ENCODE measurements at regions of chr7 and their contacts with region 1.

Region 1: DNA sequence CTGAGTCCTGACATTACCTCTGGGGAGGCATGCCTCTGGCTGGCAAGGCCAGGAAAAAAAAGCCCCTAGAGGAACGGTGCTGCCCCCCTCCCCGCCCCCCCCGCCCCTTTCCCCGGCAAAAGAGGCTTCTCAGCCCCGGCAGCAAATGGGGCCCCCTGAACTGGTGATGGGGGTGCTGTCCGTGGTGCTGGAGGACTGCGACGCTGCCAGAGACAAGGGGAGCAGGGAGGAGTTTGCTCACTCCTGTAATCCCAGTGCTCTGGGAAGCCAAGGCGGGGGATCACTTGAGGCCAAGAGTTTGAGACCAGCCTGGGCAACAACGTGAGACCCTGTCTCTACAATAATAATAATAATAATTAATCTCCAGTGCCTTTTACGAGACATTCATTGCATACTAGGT is 23.7 kb downstream of the SRRM3 start:
- DNase-seq: peak; percentile 60
- ATAC-seq: no peak
- H3K4me3 Mint-ChIP-seq: no peak overlapping the region
- H3K27ac Mint-ChIP-seq: no peak overlapping the region
- H3K4me1 Mint-ChIP-seq: no peaks in the 10 kb centered on the region
- H3K27me3 Mint-ChIP-seq: peaks cover 35% of the 10 kb centered on the region

Region 2: DNA sequence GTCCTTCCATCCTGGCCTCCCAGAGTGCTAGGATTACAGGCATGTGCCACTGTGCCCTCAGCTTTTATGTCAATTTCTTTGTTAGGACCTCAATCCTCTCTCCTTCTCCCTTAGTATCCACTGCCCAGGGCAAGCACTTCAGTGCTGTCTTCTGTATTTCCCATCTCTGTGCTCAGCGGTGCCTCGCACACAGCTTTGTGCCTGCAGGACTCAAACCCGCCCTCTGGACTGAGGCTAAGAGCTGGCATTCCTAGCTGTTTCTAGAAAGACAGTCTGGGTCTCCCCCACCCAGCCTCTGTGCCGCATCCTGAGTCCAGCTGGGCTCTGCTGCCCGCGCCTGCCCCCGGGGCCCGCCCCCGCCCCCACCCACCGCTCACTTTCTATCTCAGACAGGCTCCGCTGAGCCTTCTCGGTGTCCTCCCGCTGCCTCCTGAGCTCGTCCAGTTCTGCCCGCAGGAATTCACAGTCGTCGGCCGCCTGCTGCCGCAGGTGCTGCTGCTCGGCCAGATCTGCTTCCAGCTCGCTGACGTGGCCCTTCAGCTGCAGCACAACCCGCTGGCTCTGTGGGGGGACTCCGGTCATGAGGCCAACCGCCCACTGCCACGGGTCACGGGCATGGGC is 665.9 kb before region 1 on chr7:
- CTCF ChIA-PET with region 1: no interaction called
- POLR2A ChIA-PET with region 1: no interaction called
- intact Hi-C with region 1: no loop called
- DNase-seq: no peak
- ATAC-seq: no peak
- H3K4me3 Mint-ChIP-seq: no peak overlapping the region
- H3K27ac Mint-ChIP-seq: no peak overlapping the region
- H3K4me1 Mint-ChIP-seq: no peaks in the 10 kb centered on the region
- H3K27me3 Mint-ChIP-seq: no peaks in the 10 kb centered on the region

Region 3: GRCh38 chr7:76201730-76202665 is 23.4 kb before region 1 on chr7 and contains the start of gene SRRM3:
- CTCF ChIA-PET with region 1: interaction called, 7 read pairs
- POLR2A ChIA-PET with region 1: no interaction called
- intact Hi-C with region 1: loop called in 1 of 2 experiments (anchors 1 kb)
- DNase-seq: peak; percentile 92
- ATAC-seq: peak; percentile 92
- H3K4me3 Mint-ChIP-seq: no peak within 1 kb of the TSS
- H3K27ac Mint-ChIP-seq: no peak within 1 kb of the TSS
- H3K4me1 Mint-ChIP-seq: no peaks in the 10 kb centered on the region
- H3K27me3 Mint-ChIP-seq: peaks cover 14% of the 10 kb centered on the region
- total RNA-seq, gene SRRM3: 0.09 TPM in 1 of 2 experiments, not detected in the other

Region 4: DNA sequence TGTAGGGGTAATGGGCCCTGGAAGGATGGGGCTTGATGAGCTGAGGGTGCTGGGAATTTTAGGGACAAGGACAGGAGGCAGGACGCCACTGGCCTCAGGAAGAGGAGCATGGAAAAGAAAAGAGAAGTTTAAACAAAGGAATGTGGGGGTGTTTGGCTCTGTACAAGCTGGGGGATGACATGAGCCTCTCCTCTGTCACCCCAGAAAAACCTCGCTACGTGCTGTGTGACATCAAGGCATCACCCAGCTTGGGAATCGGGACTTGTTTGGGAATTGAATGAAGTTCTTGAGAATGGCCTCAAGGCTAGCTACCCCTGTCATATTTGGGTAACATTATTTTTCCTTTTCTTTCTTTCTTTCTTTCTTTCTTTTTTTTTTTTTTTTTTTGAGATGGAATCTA is 29.4 kb after region 1 on chr7:
- CTCF ChIA-PET with region 1: no interaction called
- POLR2A ChIA-PET with region 1: no interaction called
- intact Hi-C with region 1: no loop called
- DNase-seq: no peak
- ATAC-seq: no peak
- H3K4me3 Mint-ChIP-seq: no peak overlapping the region
- H3K27ac Mint-ChIP-seq: no peak overlapping the region
- H3K4me1 Mint-ChIP-seq: no peaks in the 10 kb centered on the region
- H3K27me3 Mint-ChIP-seq: peaks cover 14% of the 10 kb centered on the region

Region 5: DNA sequence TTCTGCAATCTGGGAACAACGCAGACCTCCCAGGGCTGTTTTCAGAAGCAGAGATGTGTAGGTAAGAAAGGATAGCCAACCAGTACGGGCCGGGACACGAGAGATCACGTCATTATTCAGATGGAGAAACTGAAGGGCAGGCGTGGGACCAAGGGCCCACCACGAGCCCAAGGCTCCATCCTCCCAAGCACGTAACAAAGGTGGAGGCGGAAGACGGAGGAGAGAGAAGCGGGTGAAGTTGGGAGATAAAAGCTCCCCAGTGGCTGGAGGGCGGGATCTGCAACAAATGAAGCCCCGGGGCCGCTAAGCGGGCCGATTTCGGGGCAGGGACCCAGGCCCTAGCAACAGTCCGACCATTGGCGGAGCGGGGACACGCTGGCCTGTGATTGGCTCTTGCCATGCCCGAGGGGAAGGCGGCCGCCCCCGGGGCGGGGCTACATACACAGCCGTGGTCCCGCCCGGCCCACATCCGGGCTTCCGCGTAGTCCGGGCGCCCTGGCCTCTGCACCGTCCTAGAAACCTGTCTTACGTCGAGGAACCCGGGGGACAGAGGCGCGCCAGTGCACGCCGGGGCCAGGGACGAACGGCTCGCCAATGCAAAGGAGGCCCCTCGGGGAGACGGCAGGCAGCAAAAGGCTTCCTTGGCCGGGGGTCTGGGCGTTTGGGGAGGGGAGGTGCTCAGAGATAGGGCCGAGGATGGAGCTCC is 92.6 kb after region 1 on chr7:
- CTCF ChIA-PET with region 1: no interaction called
- POLR2A ChIA-PET with region 1: no interaction called
- intact Hi-C with region 1: no loop called
- DNase-seq: peak; percentile 98
- ATAC-seq: peak; percentile 93
- H3K4me3 Mint-ChIP-seq: peak overlapping the region; percentile 76
- H3K27ac Mint-ChIP-seq: peak overlapping the region; percentile 94
- H3K4me1 Mint-ChIP-seq: peaks cover 25% of the 10 kb centered on the region
- H3K27me3 Mint-ChIP-seq: no peaks in the 10 kb centered on the region

Region 6: GRCh38 chr7:76364198-76364584 is 138.8 kb after region 1 on chr7:
- CTCF ChIA-PET with region 1: no interaction called
- POLR2A ChIA-PET with region 1: no interaction called
- intact Hi-C with region 1: no loop called
- DNase-seq: no peak
- ATAC-seq: no peak
- H3K4me3 Mint-ChIP-seq: no peak overlapping the region
- H3K27ac Mint-ChIP-seq: peak overlapping the region; percentile 85
- H3K4me1 Mint-ChIP-seq: peaks cover 20% of the 10 kb centered on the region
- H3K27me3 Mint-ChIP-seq: no peaks in the 10 kb centered on the region